Activated CD8-positive, alpha-beta T cell treated with anti-CD3 and anti-CD28 coated beads, Interleukin-2, amount 10 ng/mL, durations not matched to agents 7 days and 5 days (primary cell): ENCODE measurements at regions of chr14 and their contacts with region 1.

Region 1: DNA sequence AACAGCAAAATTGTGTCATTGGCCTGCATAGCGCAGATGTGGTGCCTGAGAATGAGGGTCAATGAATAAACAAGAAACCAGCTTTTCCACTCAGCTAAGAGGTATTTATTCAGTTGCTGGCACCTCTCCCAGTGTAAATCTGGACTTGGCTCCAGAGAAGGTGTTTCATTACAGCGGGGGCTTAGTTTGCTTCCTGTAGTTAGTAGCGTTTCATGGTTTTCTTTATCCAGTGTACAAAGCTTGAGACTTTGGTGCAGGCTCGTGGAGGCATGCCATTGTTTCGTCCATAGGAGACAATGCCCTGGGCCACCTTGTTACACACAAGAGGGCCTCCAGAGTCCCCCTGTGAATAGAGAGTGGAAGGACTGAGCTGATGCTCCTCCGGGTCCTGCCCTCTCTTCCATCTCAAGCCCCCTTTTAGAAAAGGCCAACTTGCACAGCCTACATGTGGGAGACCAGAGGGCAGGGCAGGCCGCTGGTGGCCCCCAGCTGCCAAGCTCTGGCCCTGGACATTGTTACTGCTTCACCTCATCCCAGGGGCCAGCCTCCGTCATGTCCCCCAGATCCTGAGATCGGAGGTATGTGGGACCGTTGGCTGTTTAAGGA is 3.0 kb downstream of the GZMB start:
- DNase-seq: no peak
- ATAC-seq: no peak
- H3K4me3 Mint-ChIP-seq: peak overlapping the region; percentile 93
- H3K27ac Mint-ChIP-seq: peak overlapping the region; percentile 98
- H3K4me1 Mint-ChIP-seq: peaks cover 74% of the 10 kb centered on the region
- H3K27me3 Mint-ChIP-seq: no peaks in the 10 kb centered on the region

Region 2: GRCh38 chr14:24612196-24612595 is 18.8 kb before region 1 on chr14:
- CTCF ChIA-PET with region 1: interaction called, 82 read pairs
- POLR2A ChIA-PET with region 1: interaction called, 20 read pairs
- DNase-seq: no peak
- ATAC-seq: no peak
- H3K4me3 Mint-ChIP-seq: no peak overlapping the region
- H3K27ac Mint-ChIP-seq: no peak overlapping the region
- H3K4me1 Mint-ChIP-seq: peaks cover 62% of the 10 kb centered on the region
- H3K27me3 Mint-ChIP-seq: no peaks in the 10 kb centered on the region

Region 3: GRCh38 chr14:24673534-24674203 is 42.7 kb after region 1 on chr14:
- CTCF ChIA-PET with region 1: interaction called, 46 read pairs
- POLR2A ChIA-PET with region 1: interaction called, 31 read pairs
- DNase-seq: peak; percentile 91
- ATAC-seq: peak; percentile 84
- H3K4me3 Mint-ChIP-seq: peak overlapping the region; percentile 75
- H3K27ac Mint-ChIP-seq: peak overlapping the region; percentile 99
- H3K4me1 Mint-ChIP-seq: peaks cover 90% of the 10 kb centered on the region
- H3K27me3 Mint-ChIP-seq: no peaks in the 10 kb centered on the region

Region 4: GRCh38 chr14:24678801-24679247 is 47.8 kb after region 1 on chr14:
- CTCF ChIA-PET with region 1: interaction called, 46 read pairs
- POLR2A ChIA-PET with region 1: interaction called, 31 read pairs
- DNase-seq: peak; percentile 92
- ATAC-seq: peak; percentile 73
- H3K4me3 Mint-ChIP-seq: peak overlapping the region; percentile 77
- H3K27ac Mint-ChIP-seq: peak overlapping the region; percentile 93
- H3K4me1 Mint-ChIP-seq: peaks cover 71% of the 10 kb centered on the region
- H3K27me3 Mint-ChIP-seq: no peaks in the 10 kb centered on the region

Region 5: DNA sequence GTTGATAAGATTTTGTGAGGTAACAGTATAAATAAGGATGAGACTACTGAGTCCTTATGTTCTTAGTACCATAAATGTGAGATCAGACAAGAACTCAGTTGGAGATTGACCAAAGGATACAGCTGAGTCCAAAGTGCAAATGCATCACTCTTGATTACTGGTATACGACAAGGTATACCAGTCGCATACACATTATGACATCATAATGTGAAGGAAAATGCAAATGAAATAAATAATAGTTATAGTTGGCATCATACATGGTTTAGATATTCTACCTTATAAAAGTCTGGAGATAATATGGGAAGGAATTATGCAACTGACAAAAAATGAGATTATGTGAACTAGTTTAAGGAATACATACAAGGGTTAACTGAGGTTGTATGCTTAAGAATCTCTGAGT is 895.3 kb after region 1 on chr14:
- CTCF ChIA-PET with region 1: no interaction called
- POLR2A ChIA-PET with region 1: no interaction called
- DNase-seq: no peak
- ATAC-seq: no peak
- H3K4me3 Mint-ChIP-seq: no peak overlapping the region
- H3K27ac Mint-ChIP-seq: no peak overlapping the region
- H3K4me1 Mint-ChIP-seq: no peaks in the 10 kb centered on the region
- H3K27me3 Mint-ChIP-seq: no peaks in the 10 kb centered on the region